ENCODE measurements at regions of chr17 and their contacts with region 1.

Region 1: DNA sequence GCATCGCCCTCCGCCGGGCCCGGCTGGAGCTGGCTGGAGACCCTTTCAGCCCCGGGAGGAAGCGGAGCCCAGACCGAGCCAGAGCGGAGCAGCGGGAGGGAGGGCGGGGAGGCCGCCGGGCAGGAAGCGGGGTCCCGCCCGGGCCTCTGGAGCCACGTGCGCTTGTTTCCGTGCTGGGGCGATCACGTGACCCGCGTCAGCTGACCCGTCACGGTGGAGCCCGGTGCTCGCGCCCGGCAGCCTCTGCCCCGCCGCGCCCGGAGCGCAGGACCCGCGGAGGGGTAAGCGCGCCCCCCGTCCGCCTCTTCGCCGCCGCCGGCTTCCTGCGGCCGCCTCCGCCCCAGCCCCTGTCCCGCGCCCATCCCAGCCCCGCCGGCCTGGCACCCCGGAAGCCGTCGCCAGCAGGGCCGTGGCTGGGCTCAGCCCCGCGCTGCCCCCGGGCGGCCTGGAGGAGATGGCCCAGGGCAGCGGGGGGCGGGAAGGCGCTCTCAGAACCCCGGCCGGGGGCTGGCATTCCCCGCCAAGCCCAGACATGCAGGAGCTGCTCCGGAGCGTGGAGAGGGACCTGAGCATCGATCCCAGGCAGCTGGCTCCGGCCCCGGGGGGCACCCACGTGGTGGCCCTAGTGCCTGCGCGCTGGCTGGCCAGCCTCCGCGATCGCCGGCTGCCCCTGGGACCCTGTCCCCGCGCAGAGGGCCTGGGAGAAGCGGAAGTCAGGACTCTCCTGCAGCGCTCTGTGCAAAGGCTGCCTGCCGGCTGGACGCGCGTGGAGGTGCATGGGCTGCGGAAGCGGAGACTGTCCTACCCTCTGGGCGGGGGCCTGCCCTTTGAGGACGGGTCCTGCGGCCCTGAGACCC is at the start of gene WDR81:
- DNase-seq: peak; percentile 57 to 94 (median 86)
- ATAC-seq: peak; percentile 71
- H3K4me3 ChIP-seq: peak within 1 kb of the TSS; percentile 57 to 62
- H3K4me3 Mint-ChIP-seq: peak within 1 kb of the TSS; percentile 79
- H3K27ac ChIP-seq: peak within 1 kb of the TSS; percentile 57 to 75
- H3K27ac Mint-ChIP-seq: peak within 1 kb of the TSS; percentile 83
- H3K4me1 ChIP-seq: peaks cover 52% of the 10 kb centered on the region
- H3K4me1 Mint-ChIP-seq: peaks cover 39% of the 10 kb centered on the region
- H3K27me3 ChIP-seq: no peaks in the 10 kb centered on the region
- H3K27me3 Mint-ChIP-seq: no peaks in the 10 kb centered on the region
- CTCF ChIP-seq: no peak
- total RNA-seq, gene WDR81: 18.9 to 20.4 TPM

Region 2: DNA sequence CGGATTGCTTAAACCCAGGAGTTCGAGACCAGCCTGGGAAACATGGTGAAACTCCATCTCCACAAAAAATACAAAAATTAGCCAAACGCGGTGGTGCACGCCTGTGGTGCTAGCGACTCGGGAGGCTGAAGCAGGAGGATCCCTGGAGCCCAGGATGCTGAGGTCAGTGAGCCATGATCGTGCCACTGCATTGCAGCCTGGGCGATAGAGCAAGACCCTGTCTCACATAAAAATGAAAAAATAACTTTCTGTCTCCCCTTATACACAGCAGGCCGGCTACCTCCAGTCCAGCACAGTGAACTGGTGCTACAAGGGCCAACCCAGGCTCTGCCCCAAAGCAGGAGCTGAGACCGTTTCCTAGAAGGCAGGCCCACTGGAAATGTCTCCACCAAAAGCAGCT is 384.4 kb before region 1 on chr17:
- CTCF ChIA-PET with region 1: no interaction called
- POLR2A ChIA-PET with region 1: no interaction called
- intact Hi-C with region 1: no loop called
- DNase-seq: no peak
- ATAC-seq: no peak
- H3K4me3 ChIP-seq: no peak overlapping the region
- H3K4me3 Mint-ChIP-seq: no peak overlapping the region
- H3K27ac ChIP-seq: no peak overlapping the region
- H3K27ac Mint-ChIP-seq: no peak overlapping the region
- H3K4me1 ChIP-seq: no peaks in the 10 kb centered on the region
- H3K4me1 Mint-ChIP-seq: peaks cover 1% of the 10 kb centered on the region
- H3K27me3 ChIP-seq: no peaks in the 10 kb centered on the region
- H3K27me3 Mint-ChIP-seq: no peaks in the 10 kb centered on the region
- CTCF ChIP-seq: no peak

Region 3: GRCh38 chr17:1498869-1499268 is 225.9 kb before region 1 on chr17:
- CTCF ChIA-PET with region 1: no interaction called
- POLR2A ChIA-PET with region 1: no interaction called
- intact Hi-C with region 1: no loop called
- DNase-seq: no peak
- ATAC-seq: no peak
- H3K4me3 ChIP-seq: no peak overlapping the region
- H3K4me3 Mint-ChIP-seq: no peak overlapping the region
- H3K27ac ChIP-seq: no peak overlapping the region
- H3K27ac Mint-ChIP-seq: no peak overlapping the region
- H3K4me1 ChIP-seq: no peaks in the 10 kb centered on the region
- H3K4me1 Mint-ChIP-seq: peaks cover 2% of the 10 kb centered on the region
- H3K27me3 ChIP-seq: no peaks in the 10 kb centered on the region
- H3K27me3 Mint-ChIP-seq: no peaks in the 10 kb centered on the region
- CTCF ChIP-seq: no peak

Region 4: GRCh38 chr17:1673041-1673785 is 51.5 kb before region 1 on chr17:
- CTCF ChIA-PET with region 1: interaction called, 10 read pairs
- POLR2A ChIA-PET with region 1: interaction called, 3 read pairs
- intact Hi-C with region 1: no loop called
- DNase-seq: peak in 4 of 9 experiments; percentile 15 to 43 (median 38)
- ATAC-seq: peak; percentile 42
- H3K4me3 ChIP-seq: no peak overlapping the region
- H3K4me3 Mint-ChIP-seq: no peak overlapping the region
- H3K27ac ChIP-seq: no peak overlapping the region
- H3K27ac Mint-ChIP-seq: no peak overlapping the region
- H3K4me1 ChIP-seq: no peaks in the 10 kb centered on the region
- H3K4me1 Mint-ChIP-seq: peaks cover 29% of the 10 kb centered on the region
- H3K27me3 ChIP-seq: no peaks in the 10 kb centered on the region
- H3K27me3 Mint-ChIP-seq: no peaks in the 10 kb centered on the region
- CTCF ChIP-seq: no peak

Region 5: GRCh38 chr17:1764284-1764683 is 39.5 kb after region 1 on chr17:
- CTCF ChIA-PET with region 1: interaction called, 39 read pairs
- POLR2A ChIA-PET with region 1: interaction called, 13 read pairs
- intact Hi-C with region 1: loop called (anchors 1 to 5 kb)
- DNase-seq: peak; percentile 33 to 89 (median 70)
- ATAC-seq: peak; percentile 94
- H3K4me3 ChIP-seq: no peak overlapping the region
- H3K4me3 Mint-ChIP-seq: peak overlapping the region; percentile 67
- H3K27ac ChIP-seq: peak overlapping the region; percentile 11 to 53
- H3K27ac Mint-ChIP-seq: peak overlapping the region; percentile 96
- H3K4me1 ChIP-seq: peaks cover 44% of the 10 kb centered on the region
- H3K4me1 Mint-ChIP-seq: peaks cover 48% of the 10 kb centered on the region
- H3K27me3 ChIP-seq: no peaks in the 10 kb centered on the region
- H3K27me3 Mint-ChIP-seq: no peaks in the 10 kb centered on the region
- CTCF ChIP-seq: no peak

Region 6: GRCh38 chr17:1783834-1784611 is 59.3 kb after region 1 on chr17:
- CTCF ChIA-PET with region 1: interaction called, 144 read pairs
- POLR2A ChIA-PET with region 1: interaction called, 7 read pairs
- intact Hi-C with region 1: loop called (anchors 1 kb)
- DNase-seq: peak in 2 of 9 experiments; percentile 36 to 52
- ATAC-seq: peak; percentile 58
- H3K4me3 ChIP-seq: no peak overlapping the region
- H3K4me3 Mint-ChIP-seq: no peak overlapping the region
- H3K27ac ChIP-seq: no peak overlapping the region
- H3K27ac Mint-ChIP-seq: no peak overlapping the region
- H3K4me1 ChIP-seq: no peaks in the 10 kb centered on the region
- H3K4me1 Mint-ChIP-seq: peaks cover 4% of the 10 kb centered on the region
- H3K27me3 ChIP-seq: no peaks in the 10 kb centered on the region
- H3K27me3 Mint-ChIP-seq: no peaks in the 10 kb centered on the region
- CTCF ChIP-seq: no peak

Region 7: DNA sequence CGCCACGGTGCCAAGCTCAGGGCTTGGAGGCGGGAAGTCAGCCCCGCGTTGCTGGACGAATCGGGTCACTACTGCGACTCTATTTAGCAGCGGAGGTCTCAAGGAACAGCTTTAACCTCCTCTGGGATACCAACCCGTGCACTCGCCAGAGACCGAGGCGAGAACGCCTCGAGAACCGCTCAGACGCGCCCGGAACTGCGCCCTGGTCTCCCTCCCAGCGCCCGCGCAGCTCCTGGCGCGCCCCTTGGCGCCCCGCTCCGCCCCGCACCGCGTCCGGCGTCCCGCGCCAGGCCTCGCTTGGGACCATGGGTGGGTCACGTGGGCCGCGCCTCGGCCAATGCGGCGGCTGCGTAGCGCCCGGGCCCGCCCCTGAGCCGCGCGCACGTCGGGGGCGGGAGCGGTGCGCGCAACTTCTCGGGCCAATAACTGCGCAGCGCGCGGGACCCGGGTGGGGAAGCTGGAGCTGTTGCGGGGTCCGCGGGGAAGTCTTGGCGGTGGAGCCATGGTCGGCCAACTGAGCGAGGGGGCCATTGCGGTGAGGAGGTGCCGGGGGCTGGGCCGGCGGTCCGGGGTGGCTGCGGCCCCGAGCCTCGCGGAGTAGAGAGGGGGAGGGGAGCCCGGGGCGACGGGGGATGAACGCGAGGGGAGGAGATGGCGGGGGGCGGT is 105.0 kb after region 1 on chr17 and contains the starts of genes RPA1 and SMYD4:
- CTCF ChIA-PET with region 1: interaction called, 12 read pairs
- POLR2A ChIA-PET with region 1: interaction called, 7 read pairs
- intact Hi-C with region 1: no loop called
- DNase-seq: peak; percentile 74 to 95 (median 86)
- ATAC-seq: peak; percentile 96
- H3K4me3 ChIP-seq: peak within 1 kb of the TSS; percentile 81 to 82
- H3K4me3 Mint-ChIP-seq: peak within 1 kb of the TSS; percentile 94
- H3K27ac ChIP-seq: peak within 1 kb of the TSS; percentile 74 to 77
- H3K27ac Mint-ChIP-seq: peak within 1 kb of the TSS; percentile 92
- H3K4me1 ChIP-seq: peaks cover 24% of the 10 kb centered on the region
- H3K4me1 Mint-ChIP-seq: peaks cover 59% of the 10 kb centered on the region
- H3K27me3 ChIP-seq: no peaks in the 10 kb centered on the region
- H3K27me3 Mint-ChIP-seq: no peaks in the 10 kb centered on the region
- CTCF ChIP-seq: no peak
- total RNA-seq, gene RPA1: 35.1 to 38.1 TPM
- total RNA-seq, gene SMYD4: 8.9 to 10.1 TPM

Measured in CD8-positive, alpha-beta T cell (primary cell).